Activated naive CD4-positive, alpha-beta T cell treated with anti-CD3 and anti-CD28 coated beads for 36 hours (primary cell): ENCODE measurements at regions of chr10 and their contacts with region 1.

Region 1: GRCh38 chr10:75019370-75019769 is 92.1 kb upstream of the SAMD8 start:
- DNase-seq: no peak
- H3K4me3 Mint-ChIP-seq: no peak overlapping the region
- H3K27ac Mint-ChIP-seq: no peak overlapping the region
- H3K4me1 Mint-ChIP-seq: peaks cover 12% of the 10 kb centered on the region
- H3K27me3 Mint-ChIP-seq: no peaks in the 10 kb centered on the region

Region 2: GRCh38 chr10:74244097-74244685 is 775.2 kb before region 1 on chr10:
- CTCF ChIA-PET with region 1: interaction called, 11 read pairs
- intact Hi-C with region 1: loop called (anchors 1 kb)
- DNase-seq: peak; percentile 38
- H3K4me3 Mint-ChIP-seq: no peak overlapping the region
- H3K27ac Mint-ChIP-seq: no peak overlapping the region
- H3K4me1 Mint-ChIP-seq: no peaks in the 10 kb centered on the region
- H3K27me3 Mint-ChIP-seq: no peaks in the 10 kb centered on the region

Region 3: GRCh38 chr10:74419958-74420375 is 599.4 kb before region 1 on chr10:
- CTCF ChIA-PET with region 1: interaction called, 7 read pairs
- intact Hi-C with region 1: loop called (anchors 1 kb)
- DNase-seq: peak; percentile 55
- H3K4me3 Mint-ChIP-seq: no peak overlapping the region
- H3K27ac Mint-ChIP-seq: no peak overlapping the region
- H3K4me1 Mint-ChIP-seq: peaks cover 6% of the 10 kb centered on the region
- H3K27me3 Mint-ChIP-seq: no peaks in the 10 kb centered on the region

Region 4: DNA sequence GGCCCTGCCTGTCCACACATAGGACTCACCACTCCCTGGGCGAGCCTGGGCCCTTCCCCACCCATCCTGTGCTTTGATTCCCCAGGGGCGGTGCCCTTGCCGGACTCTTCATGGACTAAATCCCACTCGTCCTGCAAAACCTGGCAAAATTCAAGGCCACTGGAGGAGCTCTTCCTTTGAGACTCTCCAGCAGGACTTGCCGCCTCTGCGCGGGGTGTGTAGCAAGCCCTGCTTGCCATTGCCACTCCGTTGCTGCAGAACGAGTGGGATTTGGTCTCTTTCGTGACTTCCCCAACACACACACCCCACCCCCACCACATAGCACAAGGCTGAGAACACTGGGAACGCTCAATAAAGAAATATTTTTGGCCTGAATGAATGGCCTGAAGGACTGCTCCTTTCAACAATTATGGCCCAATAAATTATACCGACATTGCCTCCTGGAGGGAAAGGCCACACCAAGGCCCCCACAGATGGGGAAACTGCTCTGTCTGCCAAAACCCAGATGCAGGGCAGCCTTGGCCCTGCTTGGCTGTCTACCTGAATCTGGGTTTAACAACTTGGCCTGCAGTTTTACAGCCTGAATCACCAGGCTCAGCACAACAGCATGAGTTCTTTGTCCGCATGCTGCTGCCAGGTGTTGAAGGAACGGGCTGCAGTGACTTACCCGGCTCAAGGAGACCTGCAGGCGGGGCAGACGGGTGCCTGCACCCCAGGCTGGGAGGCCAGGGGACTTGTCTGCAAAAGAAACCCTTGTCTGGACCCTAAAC is 265.7 kb before region 1 on chr10:
- CTCF ChIA-PET with region 1: interaction called, 6 read pairs
- intact Hi-C with region 1: loop called (anchors 5 kb)
- DNase-seq: no peak
- H3K4me3 Mint-ChIP-seq: no peak overlapping the region
- H3K27ac Mint-ChIP-seq: no peak overlapping the region
- H3K4me1 Mint-ChIP-seq: no peaks in the 10 kb centered on the region
- H3K27me3 Mint-ChIP-seq: no peaks in the 10 kb centered on the region

Region 5: DNA sequence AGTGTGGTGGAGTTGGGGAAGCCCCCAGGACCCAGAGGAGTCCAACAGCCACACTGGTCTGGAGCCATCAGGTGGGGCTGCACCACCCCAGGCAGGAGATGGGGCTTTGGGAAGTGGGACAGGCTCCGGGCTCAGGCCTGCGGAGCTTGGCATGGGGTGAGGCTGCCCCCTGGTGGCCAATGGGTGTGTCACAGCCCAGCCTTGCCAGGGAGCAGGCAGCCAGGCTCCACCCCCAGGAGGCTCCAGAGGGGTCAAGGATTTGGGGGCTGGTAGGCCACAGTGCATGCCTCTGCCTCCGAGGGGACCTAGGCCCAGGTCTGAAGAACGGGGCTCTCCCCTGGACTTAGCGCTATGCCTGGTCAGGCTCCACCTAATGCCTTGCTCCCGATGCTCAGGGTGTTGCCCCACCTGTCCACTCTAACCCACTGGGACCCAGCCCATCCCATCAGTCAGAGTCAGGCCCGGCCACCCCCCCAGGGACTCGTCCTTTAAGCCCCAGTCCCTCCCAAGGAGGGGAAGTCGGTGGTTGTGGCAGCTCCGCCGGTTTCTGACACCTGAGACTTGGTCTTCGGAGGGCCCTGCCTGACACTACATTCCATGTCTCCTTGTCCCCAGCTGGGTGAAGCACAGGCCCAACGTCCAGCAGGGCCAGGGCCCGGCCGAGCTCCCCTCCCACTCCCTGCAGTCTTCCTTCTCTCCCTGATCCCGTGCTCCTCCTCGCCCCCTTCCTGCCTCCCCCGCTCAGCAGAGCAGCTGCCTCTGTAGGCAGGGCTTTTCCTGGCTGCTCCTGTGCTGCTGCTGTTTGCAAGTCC is 80.8 kb after region 1 on chr10:
- CTCF ChIA-PET with region 1: interaction called, 11 read pairs
- intact Hi-C with region 1: loop called (anchors 2 kb)
- DNase-seq: peak; percentile 87
- H3K4me3 Mint-ChIP-seq: no peak overlapping the region
- H3K27ac Mint-ChIP-seq: no peak overlapping the region
- H3K4me1 Mint-ChIP-seq: no peaks in the 10 kb centered on the region
- H3K27me3 Mint-ChIP-seq: no peaks in the 10 kb centered on the region